GM23248 (cell line): ENCODE measurements at regions of chr13 and their contacts with region 1.

Region 1: DNA sequence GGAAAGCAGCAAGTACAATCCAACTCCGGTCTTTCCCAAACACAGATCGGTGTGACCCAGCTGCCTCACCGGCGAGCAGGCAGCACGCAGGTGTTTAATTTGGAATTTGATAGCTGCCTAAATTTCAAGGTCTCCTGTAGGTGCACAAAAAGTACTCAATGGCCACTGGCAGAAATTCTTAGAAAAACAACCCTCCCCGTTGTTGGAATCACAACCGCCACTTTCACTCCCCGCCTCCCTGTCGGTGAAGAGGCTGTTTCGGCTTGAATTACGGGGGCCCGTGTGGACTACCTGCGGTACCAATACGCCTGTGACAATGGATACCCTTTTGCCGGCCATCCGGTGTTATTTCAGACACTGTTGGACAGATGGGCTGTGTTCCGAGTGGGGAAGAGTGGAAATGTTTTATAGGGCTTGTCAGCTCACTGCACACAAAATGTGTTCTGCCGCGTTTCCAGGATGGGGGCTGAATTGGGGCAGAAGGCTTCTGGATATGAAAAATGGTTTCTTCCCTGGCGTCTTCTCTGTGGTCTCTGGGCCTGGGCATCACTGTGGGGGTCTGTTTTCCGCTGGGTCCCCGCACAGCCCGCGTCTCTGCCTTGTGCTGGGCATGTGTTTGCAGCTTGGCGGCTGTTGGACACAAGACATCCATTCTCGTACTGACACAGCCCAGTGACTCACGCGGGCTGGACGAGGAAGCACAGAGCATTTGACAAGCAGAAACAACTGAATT is 45.4 kb downstream of the ZIC5 start:
- DNase-seq: peak; percentile 59
- H3K4me3 ChIP-seq: no peak overlapping the region
- H3K27ac ChIP-seq: no peak overlapping the region
- H3K4me1 ChIP-seq: no peaks in the 10 kb centered on the region
- H3K27me3 ChIP-seq: 0 out of 2 replicates have a peak, but pooled peaks cover 5% of the 10 kb centered on the region

Region 2: GRCh38 chr13:100195568-100195967 is 269.4 kb after region 1 on chr13:
- in situ Hi-C with region 1: no loop called
- DNase-seq: no peak
- H3K4me3 ChIP-seq: no peak overlapping the region
- H3K27ac ChIP-seq: no peak overlapping the region
- H3K4me1 ChIP-seq: no peaks in the 10 kb centered on the region
- H3K27me3 ChIP-seq: no peaks in the 10 kb centered on the region

Region 3: GRCh38 chr13:100530671-100531213 is 604.6 kb after region 1 on chr13:
- in situ Hi-C with region 1: loop called (anchors 10 kb)
- DNase-seq: peak; percentile 36
- H3K4me3 ChIP-seq: no peak overlapping the region
- H3K27ac ChIP-seq: no peak overlapping the region
- H3K4me1 ChIP-seq: 0 out of 2 replicates have a peak, but pooled peaks cover 4% of the 10 kb centered on the region
- H3K27me3 ChIP-seq: no peaks in the 10 kb centered on the region